ENCODE measurements at regions of chr13 and their contacts with region 1.

Region 1: DNA sequence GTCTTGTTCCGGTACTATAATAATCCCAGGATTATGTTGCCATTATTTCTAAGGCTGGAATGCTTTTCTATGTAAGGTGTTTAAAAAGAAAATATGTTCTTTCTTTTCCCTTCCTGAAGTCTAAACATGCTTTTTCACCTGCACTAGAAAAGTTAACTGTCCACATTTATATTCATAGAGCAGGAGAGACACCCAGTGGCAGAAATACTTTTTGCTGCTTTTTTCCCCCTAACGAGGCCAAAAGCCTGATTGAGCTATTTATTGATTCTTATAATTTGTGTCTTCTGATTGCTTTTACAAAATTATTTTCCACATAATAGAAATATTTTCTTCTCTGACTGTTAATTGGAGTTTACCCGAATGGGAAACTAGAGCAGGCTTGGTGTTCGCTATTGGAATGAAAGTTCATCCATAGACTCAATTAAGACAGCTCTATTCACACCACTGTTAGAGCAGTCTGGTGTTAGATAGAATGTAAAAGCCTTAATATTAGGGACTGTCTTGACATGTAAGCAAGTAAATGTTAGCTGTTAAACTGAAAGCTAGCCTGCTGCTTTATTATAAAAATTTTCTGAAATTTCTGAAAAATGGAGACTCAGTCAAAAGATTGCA is 15.8 kb downstream of the GPR180 start:
- DNase-seq: no peak
- ATAC-seq: peak; percentile 50
- H3K4me3 ChIP-seq: no peak overlapping the region
- H3K27ac ChIP-seq: no peak overlapping the region
- H3K4me1 ChIP-seq: no peaks in the 10 kb centered on the region
- H3K27me3 ChIP-seq: no peaks in the 10 kb centered on the region
- CTCF ChIP-seq: peak; percentile 68

Region 2: DNA sequence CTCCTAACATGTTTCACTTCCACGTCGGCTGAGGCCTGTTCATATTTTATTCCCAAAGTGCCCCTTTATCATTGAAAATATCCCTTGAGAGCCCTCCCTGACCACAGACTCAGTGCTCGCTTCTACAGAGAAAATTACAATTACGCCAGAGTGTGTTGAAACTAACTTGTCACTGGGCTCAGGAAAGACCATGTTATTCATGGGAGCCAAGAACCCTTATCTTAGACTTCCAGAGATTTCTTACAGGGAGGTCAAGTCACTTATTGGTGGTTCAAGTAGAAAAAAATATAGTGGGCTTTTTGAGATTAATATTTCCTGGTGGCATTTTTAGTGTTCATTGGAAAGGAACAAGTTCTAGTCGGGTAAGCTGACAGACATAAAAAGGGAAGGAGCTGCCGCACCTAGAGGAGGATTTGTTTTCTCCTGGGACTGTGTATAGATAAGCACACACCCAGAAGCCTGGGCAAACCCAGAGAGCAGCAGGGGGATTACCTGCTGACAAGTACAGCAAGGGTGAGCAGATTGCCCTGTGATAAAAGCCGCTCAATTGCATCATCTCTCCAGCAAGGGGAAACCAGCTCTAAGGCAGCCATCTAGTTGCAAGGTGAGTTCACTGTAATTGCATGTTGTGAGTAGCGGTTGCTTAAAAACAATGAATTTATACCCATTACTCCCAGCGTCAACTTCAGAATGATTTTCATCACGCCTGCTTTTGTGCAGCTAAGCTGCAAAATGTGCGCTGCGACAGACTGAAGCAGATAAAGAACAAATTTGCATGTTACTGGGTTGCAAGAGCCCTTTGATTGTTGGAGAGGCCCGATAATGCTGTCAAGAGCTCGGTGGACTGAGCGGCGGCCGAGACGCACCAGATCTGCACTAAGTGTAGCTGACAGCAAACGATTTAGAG is 184.2 kb before region 1 on chr13:
- intact Hi-C with region 1: loop called (anchors 5 kb)
- DNase-seq: no peak
- ATAC-seq: peak; percentile 55
- H3K4me3 ChIP-seq: no peak overlapping the region
- H3K27ac ChIP-seq: no peak overlapping the region
- H3K4me1 ChIP-seq: no peaks in the 10 kb centered on the region
- H3K27me3 ChIP-seq: no peaks in the 10 kb centered on the region
- CTCF ChIP-seq: no peak

Measured in upper lobe of right lung (tissue), 1 donor.